Activated CD4-positive, alpha-beta T cell treated with anti-CD3 and anti-CD28 coated beads for 36 hours (primary cell): ENCODE measurements at regions of chr7 and their contacts with region 1.

Region 1: DNA sequence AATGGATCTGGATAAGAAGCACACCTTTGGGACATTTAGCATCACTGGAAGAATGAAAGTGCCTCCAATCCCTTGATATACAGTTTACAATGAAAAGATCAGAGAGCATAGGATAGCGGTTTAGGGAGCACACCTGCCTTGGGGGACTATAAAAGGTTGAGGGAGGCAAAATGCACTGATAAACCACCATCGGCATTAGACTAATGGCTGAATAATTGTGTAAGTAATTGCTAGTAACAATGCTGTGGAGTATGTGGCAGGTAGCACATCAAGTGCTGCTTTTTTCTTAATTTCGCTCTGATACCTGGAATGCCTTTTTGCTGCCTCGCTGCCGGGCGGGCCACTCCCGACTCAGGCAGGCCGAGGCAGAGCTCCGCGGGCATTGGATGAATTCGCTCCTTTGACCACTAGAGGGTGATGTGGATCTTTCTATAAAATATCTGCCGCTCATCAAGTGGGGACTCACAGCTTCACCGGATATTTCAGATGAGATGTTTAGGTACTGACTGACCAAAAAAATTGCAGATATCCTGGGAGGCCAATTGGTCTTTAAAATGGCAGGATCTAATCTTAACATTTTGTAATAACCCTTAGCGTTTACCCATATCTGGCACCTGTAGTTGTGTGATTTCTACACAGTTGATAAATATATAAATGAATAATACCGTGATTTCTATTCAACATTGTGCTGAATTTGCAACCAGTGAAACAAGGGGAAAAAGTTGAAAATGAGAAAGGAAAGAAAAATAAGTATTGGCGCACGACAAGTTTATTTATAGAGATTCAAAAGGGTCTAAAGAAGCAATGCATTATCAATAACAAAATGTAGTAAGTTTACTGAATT is 116.8 kb upstream of the PRSS1 start:
- DNase-seq: peak; percentile 65
- ATAC-seq: peak; percentile 59
- H3K4me3 Mint-ChIP-seq: peak overlapping the region; percentile 12
- H3K27ac Mint-ChIP-seq: peak overlapping the region; percentile 42
- H3K4me1 Mint-ChIP-seq: peaks cover 10% of the 10 kb centered on the region
- H3K27me3 Mint-ChIP-seq: peaks cover 3% of the 10 kb centered on the region

Region 2: DNA sequence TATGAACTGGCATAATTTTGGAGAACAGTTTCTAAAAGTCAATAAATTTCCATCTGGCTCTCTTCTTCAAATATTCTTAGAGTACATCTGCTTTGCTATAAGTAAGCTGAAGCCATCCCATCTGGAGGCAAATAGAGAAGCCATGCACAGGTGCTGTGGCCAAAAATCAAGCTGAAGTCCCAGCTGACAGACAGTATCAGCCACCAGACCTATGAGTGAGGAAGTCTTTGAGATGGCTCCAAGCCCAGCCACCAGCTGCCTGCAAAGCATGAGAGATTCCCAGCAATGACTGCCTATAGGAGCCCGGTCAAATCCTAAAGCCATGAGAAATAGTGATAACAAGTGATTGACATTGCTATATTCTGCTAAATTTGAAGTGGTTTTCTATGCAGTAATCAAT is 352.9 kb before region 1 on chr7:
- CTCF ChIA-PET with region 1: no interaction called
- POLR2A ChIA-PET with region 1: no interaction called
- intact Hi-C with region 1: no loop called
- DNase-seq: no peak
- ATAC-seq: no peak
- H3K4me3 Mint-ChIP-seq: no peak overlapping the region
- H3K27ac Mint-ChIP-seq: no peak overlapping the region
- H3K4me1 Mint-ChIP-seq: peaks cover 6% of the 10 kb centered on the region
- H3K27me3 Mint-ChIP-seq: peaks cover 40% of the 10 kb centered on the region

Region 3: DNA sequence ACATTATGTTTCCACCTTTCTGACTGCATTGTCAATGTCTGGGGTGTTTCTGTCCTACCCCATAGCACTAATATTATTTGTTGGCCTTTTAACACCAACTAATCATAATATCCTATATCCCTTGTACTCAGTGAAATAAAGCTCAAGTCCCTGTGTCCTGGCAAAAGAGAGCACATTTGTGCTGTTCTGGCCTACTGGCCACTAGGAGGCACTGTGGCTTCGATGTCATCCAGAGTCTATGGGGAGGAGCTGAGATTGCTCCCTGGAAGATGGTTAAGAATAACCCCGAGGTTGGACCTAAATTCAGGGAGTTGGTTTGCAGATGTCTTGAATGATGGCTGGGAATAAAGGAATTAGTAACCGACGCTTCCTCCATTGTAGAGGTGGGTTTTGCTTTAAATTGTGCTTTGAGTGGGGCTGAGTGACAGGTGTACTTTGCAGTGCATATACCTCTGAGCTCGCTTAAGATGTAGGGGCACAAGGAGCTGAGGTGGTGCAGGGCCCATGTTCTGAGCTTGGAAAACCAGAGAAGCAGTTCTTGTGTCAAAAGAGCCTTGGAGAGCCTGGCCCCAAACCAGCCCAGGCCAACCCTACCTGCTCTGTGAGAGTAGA is 74.4 kb before region 1 on chr7:
- CTCF ChIA-PET with region 1: no interaction called
- POLR2A ChIA-PET with region 1: no interaction called
- intact Hi-C with region 1: no loop called
- DNase-seq: peak; percentile 76
- ATAC-seq: peak; percentile 80
- H3K4me3 Mint-ChIP-seq: peak overlapping the region; percentile 13
- H3K27ac Mint-ChIP-seq: no peak overlapping the region
- H3K4me1 Mint-ChIP-seq: peaks cover 2% of the 10 kb centered on the region
- H3K27me3 Mint-ChIP-seq: no peaks in the 10 kb centered on the region

Region 4: GRCh38 chr7:142603870-142604448 is 28.6 kb before region 1 on chr7:
- CTCF ChIA-PET with region 1: interaction called, 12 read pairs
- POLR2A ChIA-PET with region 1: no interaction called
- intact Hi-C with region 1: loop called in 1 of 2 experiments (anchors 2 kb)
- DNase-seq: peak; percentile 69
- ATAC-seq: peak; percentile 60
- H3K4me3 Mint-ChIP-seq: peak overlapping the region; percentile 31
- H3K27ac Mint-ChIP-seq: peak overlapping the region; percentile 67
- H3K4me1 Mint-ChIP-seq: peaks cover 23% of the 10 kb centered on the region
- H3K27me3 Mint-ChIP-seq: peaks cover 3% of the 10 kb centered on the region

Region 5: GRCh38 chr7:142669074-142669654 is 36.7 kb after region 1 on chr7:
- CTCF ChIA-PET with region 1: interaction called, 4 read pairs
- POLR2A ChIA-PET with region 1: no interaction called
- intact Hi-C with region 1: loop called in 1 of 2 experiments (anchors 2 kb)
- DNase-seq: no peak
- ATAC-seq: peak; percentile 39
- H3K4me3 Mint-ChIP-seq: no peak overlapping the region
- H3K27ac Mint-ChIP-seq: peak overlapping the region; percentile 59
- H3K4me1 Mint-ChIP-seq: peaks cover 28% of the 10 kb centered on the region
- H3K27me3 Mint-ChIP-seq: no peaks in the 10 kb centered on the region

Region 6: DNA sequence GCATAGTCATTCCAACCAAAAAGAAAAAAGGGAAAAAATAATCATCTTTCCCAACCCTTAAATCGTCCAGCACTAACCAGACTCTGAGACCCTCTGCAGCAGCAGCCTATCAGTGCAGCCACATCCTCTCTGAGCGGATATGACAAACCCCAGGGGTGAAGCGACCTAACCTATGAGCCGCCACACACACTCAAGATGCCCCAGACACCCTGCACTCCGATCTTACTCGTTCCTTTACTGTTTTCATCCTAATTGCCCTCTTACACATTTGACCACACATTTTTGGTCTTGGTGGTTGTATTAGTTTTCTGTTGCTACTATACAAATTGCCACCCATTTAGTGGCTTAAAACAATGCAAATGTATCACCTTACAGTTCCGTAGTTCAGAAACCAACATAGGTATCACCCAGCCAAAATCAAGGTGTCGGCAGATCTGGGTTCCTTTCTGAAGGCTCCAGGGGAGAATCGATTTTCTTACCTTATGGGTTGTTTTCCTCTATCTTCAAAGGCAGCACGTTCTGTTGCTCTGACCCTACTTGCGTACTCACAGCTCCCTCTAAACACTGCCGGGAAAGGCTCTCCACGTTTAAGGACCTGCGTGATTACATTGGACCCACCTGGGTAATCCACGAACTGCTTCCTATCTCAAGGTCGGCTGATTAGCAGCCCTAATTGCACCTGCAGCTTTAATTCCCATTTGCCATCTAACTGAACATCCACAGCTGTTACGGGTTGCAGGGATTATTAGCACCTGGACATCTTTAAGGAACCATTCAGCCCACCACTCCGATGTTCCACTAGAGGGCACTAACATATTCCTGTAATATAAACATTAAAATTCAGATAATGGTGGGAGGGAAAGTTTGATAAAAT is 79.5 kb after region 1 on chr7:
- CTCF ChIA-PET with region 1: interaction called, 8 read pairs
- POLR2A ChIA-PET with region 1: no interaction called
- intact Hi-C with region 1: loop called in 1 of 2 experiments (anchors 2 kb)
- DNase-seq: peak; percentile 48
- ATAC-seq: peak; percentile 86
- H3K4me3 Mint-ChIP-seq: peak overlapping the region; percentile 67
- H3K27ac Mint-ChIP-seq: peak overlapping the region; percentile 85
- H3K4me1 Mint-ChIP-seq: peaks cover 65% of the 10 kb centered on the region
- H3K27me3 Mint-ChIP-seq: no peaks in the 10 kb centered on the region

Region 7: DNA sequence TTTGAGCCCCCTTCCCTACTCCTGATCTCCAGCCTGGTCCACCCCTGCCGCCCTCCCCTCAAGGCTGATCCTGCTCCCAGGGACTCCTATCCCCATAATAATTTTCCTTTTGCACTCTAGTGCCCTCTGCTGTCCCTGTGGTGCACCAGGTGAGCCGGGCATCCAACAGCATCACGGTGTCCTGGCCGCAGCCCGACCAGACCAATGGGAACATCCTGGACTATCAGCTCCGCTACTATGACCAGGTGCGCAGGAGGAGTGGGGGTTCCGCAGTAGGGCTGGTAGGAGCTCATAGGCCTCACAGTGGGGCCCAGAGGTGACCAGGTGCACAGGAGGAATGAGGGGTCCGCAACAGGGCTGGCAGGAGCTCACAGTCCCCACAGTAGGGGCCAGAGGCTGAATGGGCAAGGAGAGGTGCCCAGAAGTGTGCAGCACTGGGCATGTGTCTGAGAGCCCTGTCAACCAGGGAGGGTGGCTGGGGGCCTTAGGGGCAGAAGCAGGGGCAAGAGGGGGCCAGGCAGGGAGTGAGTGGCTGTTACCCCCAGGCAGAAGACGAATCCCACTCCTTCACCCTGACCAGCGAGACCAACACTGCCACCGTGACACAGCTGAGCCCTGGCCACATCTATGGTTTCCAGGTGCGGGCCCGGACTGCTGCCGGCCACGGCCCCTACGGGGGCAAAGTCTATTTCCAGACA is 234.0 kb after region 1 on chr7:
- CTCF ChIA-PET with region 1: interaction called, 3 read pairs
- POLR2A ChIA-PET with region 1: no interaction called
- intact Hi-C with region 1: loop called in 1 of 2 experiments (anchors 5 kb)
- DNase-seq: peak; percentile 41
- ATAC-seq: peak; percentile 47
- H3K4me3 Mint-ChIP-seq: no peak overlapping the region
- H3K27ac Mint-ChIP-seq: no peak overlapping the region
- H3K4me1 Mint-ChIP-seq: no peaks in the 10 kb centered on the region
- H3K27me3 Mint-ChIP-seq: no peaks in the 10 kb centered on the region